ENCODE measurements at regions of chr3 and their contacts with region 1.

Region 1: GRCh38 chr3:175554801-175555200 is 695.7 kb downstream of the NAALADL2 start:
- DNase-seq: no peak

Region 2: DNA sequence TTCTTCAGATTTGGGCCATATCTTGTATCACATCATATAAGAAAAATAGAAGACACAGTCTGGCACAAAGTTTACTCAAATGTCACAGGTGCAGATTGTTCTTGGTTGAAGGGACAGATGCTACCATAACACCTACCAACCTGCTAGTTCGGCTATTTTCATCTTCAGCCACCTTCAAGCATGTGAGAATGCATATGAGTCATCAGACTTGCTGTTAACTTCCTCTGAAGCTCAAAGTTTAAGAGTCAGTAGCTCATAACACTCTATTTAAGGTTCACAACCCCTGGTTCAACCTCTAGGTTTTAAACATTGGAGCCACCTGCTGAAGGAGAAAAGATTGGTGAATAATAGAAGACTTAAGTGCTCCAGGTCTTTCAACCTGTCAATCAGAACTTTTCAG is 1634.4 kb before region 1 on chr3:
- intact Hi-C with region 1: loop called in 1 of 2 experiments (anchors 10 kb)
- DNase-seq: no peak

Region 3: GRCh38 chr3:174170248-174170647 is 1384.6 kb before region 1 on chr3:
- intact Hi-C with region 1: loop called in 1 of 2 experiments (anchors 10 kb)
- DNase-seq: no peak

Measured in posterior vena cava (tissue), 2 donors.